PC-9 (cell line): ENCODE measurements at regions of chr7 and their contacts with region 1.

Region 1: DNA sequence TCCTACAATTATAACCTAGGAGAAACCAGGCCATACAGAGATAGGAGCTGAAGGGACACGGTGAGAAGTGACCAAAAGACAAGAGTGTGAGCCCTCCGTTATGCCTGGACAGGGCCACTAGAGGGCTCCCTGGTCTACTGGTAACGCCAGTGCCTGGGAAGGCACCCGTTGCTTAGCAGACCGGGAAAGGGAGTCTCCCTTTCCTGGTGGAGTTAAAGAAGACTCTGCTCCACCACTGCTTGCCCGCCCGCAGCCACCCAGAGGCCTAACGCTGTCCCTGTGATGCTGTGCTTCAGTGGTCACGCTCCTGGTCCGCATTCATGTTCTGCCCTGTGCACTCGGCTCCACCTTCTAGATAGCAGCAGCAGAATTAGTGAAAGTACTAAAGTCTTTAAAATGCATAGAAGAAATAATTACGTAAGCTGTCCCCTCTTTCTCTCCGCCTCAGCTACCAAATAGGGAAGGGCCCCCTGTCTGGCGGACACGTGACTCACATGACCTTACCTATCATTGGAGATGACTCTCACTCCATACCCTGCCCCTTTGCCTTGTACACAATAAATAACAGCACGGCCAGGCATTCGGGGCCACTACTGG is 34.8 kb downstream of the GRID2IP start:
- DNase-seq: peak; percentile 74 to 83
- H3K4me3 ChIP-seq: no peak overlapping the region
- H3K27ac ChIP-seq: no peak overlapping the region
- H3K4me1 ChIP-seq: 0 out of 2 replicates have a peak, but pooled peaks cover 3% of the 10 kb centered on the region
- H3K27me3 ChIP-seq: no peaks in the 10 kb centered on the region; the same call in 1 of the 2 replicates
- CTCF ChIP-seq: peak; percentile 95

Region 2: DNA sequence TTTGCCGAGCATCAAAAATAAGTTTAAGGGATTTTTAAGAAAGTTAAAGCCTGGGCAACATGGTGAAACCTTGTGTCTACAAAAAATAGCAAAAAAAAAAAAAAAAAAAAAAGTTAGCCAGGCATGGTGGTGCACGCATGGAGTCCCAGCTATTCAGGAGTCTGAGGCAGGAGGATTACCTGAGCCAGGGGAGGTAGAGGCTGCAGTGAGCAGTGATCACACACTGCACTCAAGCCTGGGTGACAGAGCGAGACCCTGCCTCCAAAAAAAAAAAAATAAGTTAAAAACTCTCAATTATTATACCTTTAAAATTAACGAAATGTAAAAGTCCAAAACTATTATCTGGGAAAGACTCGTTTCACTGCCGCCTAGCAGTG is 33.8 kb before region 1 on chr7:
- CTCF ChIA-PET with region 1: no interaction called
- POLR2A ChIA-PET with region 1: no interaction called
- intact Hi-C with region 1: no loop called
- DNase-seq: no peak
- H3K4me3 ChIP-seq: peak overlapping the region; percentile 99
- H3K27ac ChIP-seq: peak overlapping the region; percentile 69
- H3K4me1 ChIP-seq: peaks cover 38% of the 10 kb centered on the region
- H3K27me3 ChIP-seq: no peaks in the 10 kb centered on the region
- CTCF ChIP-seq: no peak

Region 3: GRCh38 chr7:6553448-6554044 is 37.1 kb after region 1 on chr7:
- CTCF ChIA-PET with region 1: interaction called, 10 read pairs
- POLR2A ChIA-PET with region 1: no interaction called
- intact Hi-C with region 1: no loop called
- DNase-seq: no peak
- H3K4me3 ChIP-seq: no peak overlapping the region
- H3K27ac ChIP-seq: no peak overlapping the region
- H3K4me1 ChIP-seq: no peaks in the 10 kb centered on the region
- H3K27me3 ChIP-seq: no peaks in the 10 kb centered on the region
- CTCF ChIP-seq: peak; percentile 46

Region 4: GRCh38 chr7:6637544-6638229 is 121.2 kb after region 1 on chr7:
- CTCF ChIA-PET with region 1: no interaction called
- POLR2A ChIA-PET with region 1: no interaction called
- intact Hi-C with region 1: loop called (anchors 5 kb)
- DNase-seq: peak in 1 of 2 experiments; percentile 65
- H3K4me3 ChIP-seq: peak overlapping the region; percentile 71
- H3K27ac ChIP-seq: no peak overlapping the region
- H3K4me1 ChIP-seq: peaks cover 21% of the 10 kb centered on the region
- H3K27me3 ChIP-seq: no peaks in the 10 kb centered on the region
- CTCF ChIP-seq: peak; percentile 58

Region 5: GRCh38 chr7:7566651-7567611 is 1050.4 kb after region 1 on chr7 and contains the start of gene MIOS:
- CTCF ChIA-PET with region 1: no interaction called
- POLR2A ChIA-PET with region 1: no interaction called
- intact Hi-C with region 1: loop called (anchors 10 kb)
- DNase-seq: peak; percentile 67 to 91
- H3K4me3 ChIP-seq: peak within 1 kb of the TSS; percentile 92
- H3K27ac ChIP-seq: peak within 1 kb of the TSS; percentile 97
- H3K4me1 ChIP-seq: peaks cover 64% of the 10 kb centered on the region
- H3K27me3 ChIP-seq: no peaks in the 10 kb centered on the region
- CTCF ChIP-seq: no peak
- total RNA-seq, gene MIOS: 35.8 and 42.0 TPM in 2 replicates